ENCODE measurements at regions of chr18 and their contacts with region 1.

Region 1: GRCh38 chr18:3481696-3482210 is 31.8 kb downstream of the TGIF1 start:
- DNase-seq: peak; percentile 33
- ATAC-seq: peak; percentile 96
- H3K4me3 ChIP-seq: no peak overlapping the region
- H3K27ac ChIP-seq: no peak overlapping the region
- H3K4me1 ChIP-seq: peaks cover 8% of the 10 kb centered on the region; the same call in 1 of the 2 replicates
- H3K27me3 ChIP-seq: peaks cover 0 to 5% of the 10 kb centered on the region in 2 experiments; a peak in 2 of 5 replicates
- CTCF ChIP-seq: peak; percentile 43
- EP300 ChIP-seq: no peak
- POLR2A ChIP-seq: no peak
- RAD21 ChIP-seq: no peak

Region 2: DNA sequence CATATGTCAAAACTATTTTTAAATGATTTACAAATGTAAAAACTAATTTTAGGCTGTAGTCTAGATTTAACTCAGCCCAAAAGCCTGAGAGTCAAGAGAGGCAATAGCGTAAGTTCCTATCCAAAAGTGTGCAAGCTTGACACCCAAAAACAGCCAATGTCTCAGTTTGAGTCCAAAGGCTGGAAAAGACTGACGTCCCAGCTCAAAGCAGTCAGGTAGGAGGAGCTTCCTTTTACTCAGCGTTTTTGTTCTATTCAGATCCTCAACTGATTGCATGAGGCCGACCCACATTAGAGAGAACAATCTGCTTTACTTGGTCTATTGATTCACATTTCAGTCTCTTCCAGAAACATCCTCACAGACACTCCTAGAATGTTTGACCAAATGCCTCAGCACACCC is 168.1 kb before region 1 on chr18:
- CTCF ChIA-PET with region 1: no interaction called
- POLR2A ChIA-PET with region 1: no interaction called
- in situ Hi-C with region 1: no loop called
- intact Hi-C with region 1: no loop called
- DNase-seq: peak; percentile 3
- ATAC-seq: no peak
- H3K4me3 ChIP-seq: no peak overlapping the region
- H3K27ac ChIP-seq: no peak overlapping the region
- H3K4me1 ChIP-seq: 0 out of 2 replicates have a peak, but pooled peaks cover 8% of the 10 kb centered on the region
- H3K27me3 ChIP-seq: no peaks in the 10 kb centered on the region; a peak in 1 of 5 replicates
- CTCF ChIP-seq: no peak
- EP300 ChIP-seq: no peak
- POLR2A ChIP-seq: no peak
- RAD21 ChIP-seq: no peak

Region 3: GRCh38 chr18:3380384-3380961 is 101.3 kb before region 1 on chr18:
- CTCF ChIA-PET with region 1: no interaction called
- POLR2A ChIA-PET with region 1: no interaction called
- in situ Hi-C with region 1: loop called (anchors 25 kb)
- intact Hi-C with region 1: no loop called
- DNase-seq: no peak
- ATAC-seq: no peak
- H3K4me3 ChIP-seq: no peak overlapping the region
- H3K27ac ChIP-seq: no peak overlapping the region
- H3K4me1 ChIP-seq: peaks cover 11% of the 10 kb centered on the region
- H3K27me3 ChIP-seq: peaks cover 0 to 9% of the 10 kb centered on the region in 2 experiments; a peak in 2 of 5 replicates
- CTCF ChIP-seq: no peak
- EP300 ChIP-seq: no peak
- POLR2A ChIP-seq: no peak
- RAD21 ChIP-seq: no peak

Region 4: DNA sequence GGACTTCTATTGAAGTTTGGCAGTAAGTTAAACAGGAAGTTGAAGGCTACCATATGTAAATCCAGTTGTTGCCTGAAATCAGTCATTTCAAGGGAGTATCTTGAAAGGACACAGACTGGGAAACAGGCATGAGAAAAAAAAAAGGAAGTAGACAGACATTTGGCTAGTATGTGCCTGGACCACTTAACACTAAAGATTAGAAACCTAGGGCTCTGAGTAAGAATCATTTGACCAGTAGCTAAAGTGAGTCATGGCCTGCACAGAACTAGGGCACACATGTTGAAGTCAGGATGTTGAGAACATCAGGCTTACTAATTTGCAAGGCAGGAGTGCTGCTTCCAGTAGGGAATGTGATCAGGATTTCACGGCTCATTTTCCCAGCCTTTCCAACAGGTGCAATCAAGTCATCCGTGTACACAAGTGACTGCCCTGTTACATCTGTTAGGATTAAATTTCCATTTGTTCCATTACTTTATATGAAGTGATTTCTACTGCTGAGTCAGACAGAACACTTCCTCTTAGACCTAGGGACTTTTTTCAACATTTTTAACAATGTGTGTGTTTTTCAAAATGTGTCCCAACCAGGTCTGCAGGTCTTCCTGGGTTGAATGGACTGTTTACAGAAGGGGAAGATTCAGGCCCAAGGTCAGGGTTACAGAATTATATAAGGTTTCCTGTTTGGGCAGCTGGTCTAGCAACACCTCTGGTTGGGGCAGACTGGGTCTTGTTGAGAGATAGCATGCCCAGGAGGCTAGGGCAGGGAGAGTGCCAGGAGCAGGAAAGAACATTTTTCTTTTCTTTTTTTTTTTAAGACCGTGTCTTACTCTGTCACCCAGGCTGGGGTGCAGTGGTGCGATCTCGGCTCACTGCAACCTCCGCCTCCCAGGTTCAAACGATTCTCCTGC is 113.9 kb after region 1 on chr18:
- CTCF ChIA-PET with region 1: no interaction called
- POLR2A ChIA-PET with region 1: no interaction called
- in situ Hi-C with region 1: no loop called
- intact Hi-C with region 1: no loop called
- DNase-seq: peak; percentile 92
- ATAC-seq: peak; percentile 46
- H3K4me3 ChIP-seq: peak overlapping the region; percentile 73 to 94 (median 78)
- H3K27ac ChIP-seq: peak overlapping the region; percentile 96
- H3K4me1 ChIP-seq: peaks cover 75% of the 10 kb centered on the region
- H3K27me3 ChIP-seq: no peaks in the 10 kb centered on the region; a peak in 1 of 5 replicates
- CTCF ChIP-seq: no peak
- EP300 ChIP-seq: peak; percentile 47 to 95; a peak in 2 of 4 replicates
- POLR2A ChIP-seq: peak; percentile 16 to 48; a peak in 3 of 4 replicates
- RAD21 ChIP-seq: no peak

Measured in HepG2 (cell line).